Prostate gland (tissue), 2 donors: ENCODE measurements at regions of chr6 and their contacts with region 1.

Region 1: GRCh38 chr6:158072083-158072721 is 90.5 kb downstream of the SYNJ2 start:
- DNase-seq: peak; percentile 64
- H3K4me3 ChIP-seq: no peak overlapping the region
- H3K27ac ChIP-seq: no peak overlapping the region
- H3K4me1 ChIP-seq: no peaks in the 10 kb centered on the region
- H3K27me3 ChIP-seq: no peaks in the 10 kb centered on the region
- CTCF ChIP-seq: peak; percentile 65 to 90 (median 84)
- POLR2A ChIP-seq: no peak

Region 2: GRCh38 chr6:157323255-157323965 is 748.8 kb before region 1 on chr6 and contains the start of gene TMEM242:
- intact Hi-C with region 1: loop called (anchors 10 kb)
- DNase-seq: peak; percentile 84
- H3K4me3 ChIP-seq: peak within 1 kb of the TSS; percentile 73 to 78
- H3K27ac ChIP-seq: peak within 1 kb of the TSS; percentile 83 to 92
- H3K4me1 ChIP-seq: no peaks in the 10 kb centered on the region
- H3K27me3 ChIP-seq: no peaks in the 10 kb centered on the region
- CTCF ChIP-seq: peak in 3 of 4 experiments; percentile 16 to 51 (median 41)
- POLR2A ChIP-seq: peak; percentile 76
- total RNA-seq, gene TMEM242: 6.4 to 8.5 TPM

Region 3: GRCh38 chr6:157656437-157656997 is 415.7 kb before region 1 on chr6:
- intact Hi-C with region 1: no loop called
- DNase-seq: no peak
- H3K4me3 ChIP-seq: no peak overlapping the region
- H3K27ac ChIP-seq: no peak overlapping the region
- H3K4me1 ChIP-seq: no peaks in the 10 kb centered on the region
- H3K27me3 ChIP-seq: no peaks in the 10 kb centered on the region
- CTCF ChIP-seq: no peak
- POLR2A ChIP-seq: no peak

Region 4: DNA sequence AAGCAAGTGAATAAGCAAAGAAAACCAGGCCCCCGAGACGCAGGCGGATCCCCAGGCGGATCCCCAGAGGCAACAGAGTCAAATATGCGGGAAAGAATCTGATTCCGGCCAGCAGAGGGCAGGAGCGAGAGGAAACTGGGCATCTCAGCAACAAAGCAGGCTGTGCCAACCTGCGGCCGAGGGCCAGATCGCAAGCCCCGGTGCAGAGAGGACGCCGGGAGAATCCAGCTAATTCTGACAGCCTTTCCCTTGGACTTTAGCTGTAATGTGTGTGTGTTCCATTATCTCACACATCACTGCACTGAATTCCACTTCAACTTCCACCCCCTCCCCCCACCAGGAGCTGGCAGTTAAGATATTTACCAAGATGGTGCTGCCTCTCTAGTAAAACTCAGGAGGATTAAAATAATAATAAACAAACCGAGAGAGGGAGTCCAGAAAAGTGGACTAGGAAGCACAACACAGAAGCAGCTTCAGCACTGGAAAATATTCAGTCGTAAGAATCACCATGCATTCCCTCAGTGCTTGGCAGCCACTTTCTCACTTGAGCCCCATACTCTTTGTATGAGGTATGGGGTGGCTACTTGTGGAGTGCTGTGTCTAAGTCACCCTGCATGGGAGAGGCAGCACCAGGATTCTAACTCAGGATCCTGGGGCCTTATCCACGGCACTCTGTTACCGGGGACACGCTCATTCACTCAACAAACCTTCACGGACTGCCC is 315.3 kb before region 1 on chr6:
- intact Hi-C with region 1: loop called (anchors 5 kb)
- DNase-seq: peak; percentile 89
- H3K4me3 ChIP-seq: peak overlapping the region in 1 of 2 donors; percentile 2
- H3K27ac ChIP-seq: peak overlapping the region; percentile 44 to 62
- H3K4me1 ChIP-seq: no peaks in the 10 kb centered on the region
- H3K27me3 ChIP-seq: no peaks in the 10 kb centered on the region
- CTCF ChIP-seq: peak; percentile 69 to 87 (median 84)
- POLR2A ChIP-seq: no peak

Region 5: GRCh38 chr6:157921685-157922367 is 150.4 kb before region 1 on chr6:
- intact Hi-C with region 1: no loop called
- DNase-seq: no peak
- H3K4me3 ChIP-seq: no peak overlapping the region
- H3K27ac ChIP-seq: no peak overlapping the region
- H3K4me1 ChIP-seq: no peaks in the 10 kb centered on the region
- H3K27me3 ChIP-seq: no peaks in the 10 kb centered on the region
- CTCF ChIP-seq: no peak
- POLR2A ChIP-seq: no peak

Region 6: GRCh38 chr6:157981395-157982296 is 90.6 kb before region 1 on chr6 and contains the start of gene SYNJ2:
- intact Hi-C with region 1: loop called (anchors 5 kb)
- DNase-seq: peak; percentile 83
- H3K4me3 ChIP-seq: peak within 1 kb of the TSS; percentile 88 to 98
- H3K27ac ChIP-seq: peak within 1 kb of the TSS; percentile 87 to 89
- H3K4me1 ChIP-seq: no peaks in the 10 kb centered on the region
- H3K27me3 ChIP-seq: no peaks in the 10 kb centered on the region
- CTCF ChIP-seq: peak; percentile 65 to 86 (median 70)
- POLR2A ChIP-seq: peak; percentile 86
- total RNA-seq, gene SYNJ2: 19.7 to 19.9 TPM

Region 7: DNA sequence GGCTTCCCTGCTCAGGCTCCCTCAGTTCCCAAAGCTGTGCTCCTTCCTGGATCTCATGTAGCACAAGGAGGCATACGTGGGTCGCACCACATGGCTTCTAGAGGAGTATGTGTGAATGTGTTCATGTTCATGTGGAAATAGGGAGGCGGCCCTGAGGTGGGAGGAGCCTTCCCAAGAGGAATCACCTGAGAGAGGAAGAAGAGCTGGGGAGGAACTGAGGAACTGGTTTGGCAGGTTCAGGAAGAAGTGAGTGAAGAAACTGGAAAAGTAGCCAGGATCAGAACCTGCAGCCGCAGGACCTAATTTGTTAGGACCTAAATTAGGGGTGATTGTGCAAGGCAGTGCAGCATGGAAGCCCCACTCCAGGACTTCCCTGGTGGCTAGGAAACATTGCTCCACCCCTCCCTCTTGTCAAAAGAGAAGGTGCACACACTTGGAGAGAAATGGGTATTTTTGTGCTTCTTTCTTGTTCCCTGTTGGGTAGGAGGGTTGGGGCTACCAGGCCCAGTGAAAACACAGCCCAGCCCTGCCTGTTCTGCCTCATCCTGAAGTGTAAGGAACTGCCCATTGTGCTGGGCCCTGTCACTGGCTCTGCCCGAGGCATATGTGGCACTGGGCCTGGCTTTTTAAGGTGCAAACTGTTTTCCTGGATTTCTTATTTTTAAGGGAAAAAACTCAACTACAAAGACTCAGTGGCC is 69.8 kb before region 1 on chr6:
- intact Hi-C with region 1: no loop called
- DNase-seq: peak; percentile 75
- H3K4me3 ChIP-seq: no peak overlapping the region
- H3K27ac ChIP-seq: peak overlapping the region; percentile 75 to 77
- H3K4me1 ChIP-seq: peaks cover 16% of the 10 kb centered on the region
- H3K27me3 ChIP-seq: no peaks in the 10 kb centered on the region
- CTCF ChIP-seq: no peak
- POLR2A ChIP-seq: no peak

Region 8: DNA sequence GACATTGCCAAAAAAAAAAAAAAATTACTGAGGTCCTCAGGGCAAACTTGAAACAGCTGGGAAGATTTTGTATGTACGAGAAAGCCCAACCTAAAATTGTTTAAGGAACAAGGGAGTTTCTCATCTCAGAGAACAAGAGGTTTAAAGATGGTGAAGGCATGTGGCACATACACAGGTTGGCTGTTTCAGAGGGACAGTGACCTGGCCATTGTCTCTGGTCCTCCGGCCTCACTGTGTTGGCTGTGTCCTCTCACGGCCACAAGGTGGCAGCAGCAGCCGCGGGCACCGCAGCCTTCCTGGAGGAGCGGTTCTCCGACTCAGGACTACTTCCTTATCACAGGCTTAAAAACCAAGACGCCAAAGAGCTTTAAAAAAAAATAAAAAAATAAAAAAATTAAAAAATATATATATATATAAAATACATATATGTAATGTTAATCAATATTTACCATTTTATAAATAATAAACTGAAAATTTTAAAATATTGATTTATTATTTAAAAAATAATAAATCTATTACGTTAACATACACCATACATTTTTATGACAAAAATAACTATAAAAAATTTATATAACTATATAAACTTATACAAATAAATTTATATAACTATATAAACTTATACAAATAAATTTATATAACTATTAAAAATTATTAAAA is 148.7 kb after region 1 on chr6:
- intact Hi-C with region 1: no loop called
- DNase-seq: peak; percentile 73
- H3K4me3 ChIP-seq: no peak overlapping the region
- H3K27ac ChIP-seq: no peak overlapping the region
- H3K4me1 ChIP-seq: no peaks in the 10 kb centered on the region
- H3K27me3 ChIP-seq: no peaks in the 10 kb centered on the region
- CTCF ChIP-seq: peak; percentile 84 to 93 (median 91)
- POLR2A ChIP-seq: no peak